SK-N-SH (cell line): ENCODE measurements at regions of chr9 and their contacts with region 1.

Region 1: GRCh38 chr9:121634329-121635261 is 16.8 kb upstream of the DAB2IP start:
- DNase-seq: peak; percentile 86
- H3K4me3 ChIP-seq: no peak overlapping the region; a peak in 1 of 4 replicates
- H3K27ac ChIP-seq: no peak overlapping the region
- H3K4me1 ChIP-seq: peaks cover 8 to 52% of the 10 kb centered on the region in 2 experiments; a peak in 3 of 4 replicates
- H3K27me3 ChIP-seq: no peaks in the 10 kb centered on the region
- CTCF ChIP-seq: peak; percentile 68
- EP300 ChIP-seq: no peak
- RAD21 ChIP-seq: peak; percentile 89

Region 2: DNA sequence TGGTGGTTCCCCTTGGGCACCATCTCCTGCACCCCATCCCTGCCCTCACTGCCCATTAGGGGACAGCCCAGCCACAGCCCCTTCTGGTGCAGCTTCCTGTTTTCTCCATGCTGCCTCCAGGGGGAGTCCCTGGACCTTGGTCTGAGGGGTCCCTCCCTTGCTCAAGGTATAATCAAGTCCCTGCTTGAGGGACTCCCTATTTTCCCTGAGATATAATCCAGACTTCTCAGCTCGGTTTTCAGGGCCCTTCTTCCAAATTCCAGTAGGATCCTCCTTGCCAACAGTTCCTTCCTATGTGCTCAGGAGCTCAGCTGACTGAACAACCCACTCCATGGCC is 13.5 kb before region 1 on chr9:
- CTCF ChIA-PET with region 1: interaction called, 31 read pairs
- POLR2A ChIA-PET with region 1: interaction called, 3 read pairs
- DNase-seq: peak; percentile 79
- H3K4me3 ChIP-seq: no peak overlapping the region; a peak in 1 of 4 replicates
- H3K27ac ChIP-seq: no peak overlapping the region
- H3K4me1 ChIP-seq: peaks cover 0 to 20% of the 10 kb centered on the region in 2 experiments; a peak in 1 of 4 replicates
- H3K27me3 ChIP-seq: no peaks in the 10 kb centered on the region
- CTCF ChIP-seq: peak; percentile 64
- EP300 ChIP-seq: no peak
- RAD21 ChIP-seq: peak; percentile 69

Region 3: GRCh38 chr9:121692606-121693387 is 58.2 kb after region 1 on chr9:
- CTCF ChIA-PET with region 1: interaction called, 194 read pairs
- POLR2A ChIA-PET with region 1: no interaction called
- DNase-seq: no peak
- H3K4me3 ChIP-seq: no peak overlapping the region
- H3K27ac ChIP-seq: peak overlapping the region in 1 of 2 experiments; percentile 60; a peak in 2 of 4 replicates
- H3K4me1 ChIP-seq: peaks cover 14 to 16% of the 10 kb centered on the region in 2 experiments; a peak in 3 of 4 replicates
- H3K27me3 ChIP-seq: no peaks in the 10 kb centered on the region
- CTCF ChIP-seq: no peak
- EP300 ChIP-seq: no peak
- RAD21 ChIP-seq: no peak